ENCODE measurements at regions of chr6 and their contacts with region 1.

Region 1: GRCh38 chr6:131914967-131915751 is 36.0 kb downstream of the CCN2 start:
- DNase-seq: no peak
- H3K4me3 ChIP-seq: no peak overlapping the region
- H3K27me3 ChIP-seq: no peaks in the 10 kb centered on the region
- CTCF ChIP-seq: peak; percentile 86

Region 2: GRCh38 chr6:131663577-131664165 is 251.5 kb before region 1 on chr6:
- CTCF ChIA-PET with region 1: no interaction called
- POLR2A ChIA-PET with region 1: no interaction called
- DNase-seq: no peak
- H3K4me3 ChIP-seq: no peak overlapping the region
- H3K27me3 ChIP-seq: no peaks in the 10 kb centered on the region
- CTCF ChIP-seq: no peak

Region 3: DNA sequence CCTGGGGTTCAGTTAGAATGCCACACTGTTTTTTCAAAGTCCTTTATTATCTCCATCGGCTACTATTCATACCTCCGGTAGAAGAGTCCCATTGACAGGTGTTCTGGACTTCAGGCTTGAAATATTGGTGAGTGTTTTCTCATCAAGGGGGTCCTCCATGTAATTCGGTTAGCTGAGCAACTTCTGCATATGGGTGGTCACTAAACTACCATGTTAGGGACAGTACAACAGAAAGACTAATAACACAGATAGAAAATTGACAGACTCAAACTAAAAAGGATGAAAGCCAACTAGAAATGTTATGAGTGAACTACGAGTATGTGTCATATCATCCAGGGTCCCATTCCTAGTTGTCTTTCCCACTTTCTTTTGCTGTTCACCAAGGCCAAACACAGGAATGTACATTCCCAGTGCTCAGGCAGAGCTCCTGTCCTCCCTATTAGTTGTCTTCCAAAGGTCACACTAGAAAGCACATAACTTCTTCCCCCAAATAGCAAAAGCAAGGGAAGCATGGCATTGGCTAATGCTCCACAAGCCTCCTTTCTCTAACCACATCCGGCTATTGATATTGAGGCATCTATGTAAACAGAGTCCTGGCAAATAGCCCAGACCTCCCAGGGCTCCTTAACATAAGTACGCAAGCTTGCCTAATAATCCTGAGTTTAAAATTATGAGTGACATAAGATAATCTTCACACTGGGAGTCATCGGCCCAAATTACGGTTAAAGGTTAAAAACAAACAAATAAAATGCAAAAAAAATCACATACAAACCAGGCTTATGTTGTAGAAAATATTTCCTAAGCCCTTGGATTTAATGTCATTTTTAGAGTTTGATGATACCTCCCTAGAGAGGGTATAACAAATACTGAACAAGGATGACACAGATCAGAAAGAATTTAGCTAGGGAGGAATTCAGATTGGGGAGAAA is 22.8 kb after region 1 on chr6:
- CTCF ChIA-PET with region 1: interaction called, 15 read pairs
- POLR2A ChIA-PET with region 1: no interaction called
- DNase-seq: no peak
- H3K4me3 ChIP-seq: no peak overlapping the region
- H3K27me3 ChIP-seq: no peaks in the 10 kb centered on the region
- CTCF ChIP-seq: no peak

Region 4: DNA sequence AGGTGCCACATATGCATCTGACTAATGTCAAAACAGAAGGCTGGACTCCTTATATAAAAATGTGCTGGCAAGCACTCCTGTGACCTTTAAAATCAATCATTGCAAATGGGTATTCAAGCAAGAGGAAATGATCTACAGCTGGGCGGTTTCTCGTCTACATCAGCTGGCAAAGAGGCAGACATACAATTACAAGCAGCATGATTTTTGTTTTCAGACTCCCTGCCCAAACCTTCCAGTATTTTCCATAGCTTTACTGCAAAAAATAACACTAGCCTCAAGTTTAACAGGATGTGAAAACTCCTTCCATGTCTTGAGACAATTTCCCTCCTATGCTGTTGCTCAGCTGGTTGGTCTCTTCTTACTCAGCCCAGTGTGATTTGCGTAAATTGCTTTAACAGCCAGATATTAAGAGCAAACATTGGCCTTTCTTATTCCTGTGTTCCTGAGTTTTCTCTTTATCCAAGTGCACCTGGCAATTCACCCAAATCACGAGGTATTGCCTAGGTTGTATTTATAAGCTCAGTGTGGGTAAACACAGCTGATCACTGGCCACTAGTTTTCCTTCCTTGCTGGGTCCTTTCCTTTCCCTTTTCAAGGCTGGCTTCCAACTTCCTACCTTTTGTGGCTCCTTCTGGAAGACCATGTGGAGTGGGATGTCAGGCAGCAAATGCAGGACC is 355.7 kb after region 1 on chr6:
- CTCF ChIA-PET with region 1: interaction called, 11 read pairs
- POLR2A ChIA-PET with region 1: no interaction called
- DNase-seq: no peak
- H3K4me3 ChIP-seq: no peak overlapping the region
- H3K27me3 ChIP-seq: no peaks in the 10 kb centered on the region
- CTCF ChIP-seq: no peak

Region 5: GRCh38 chr6:132300323-132300949 is 385.3 kb after region 1 on chr6:
- CTCF ChIA-PET with region 1: interaction called, 14 read pairs
- POLR2A ChIA-PET with region 1: no interaction called
- DNase-seq: no peak
- H3K4me3 ChIP-seq: no peak overlapping the region
- H3K27me3 ChIP-seq: no peaks in the 10 kb centered on the region
- CTCF ChIP-seq: peak; percentile 61